T-cell (primary cell): ENCODE measurements at regions of chr1 and their contacts with region 1.

Region 1: GRCh38 chr1:40161888-40162397 is 756 bp downstream of the RLF start:
- DNase-seq: peak in 4 of 35 experiments; percentile 6 to 16 (median 10)
- ATAC-seq: peak in 2 of 4 experiments; percentile 14 to 19
- H3K4me3 ChIP-seq: peak overlapping the region; percentile 91 to 92
- H3K4me3 Mint-ChIP-seq: no peak overlapping the region
- H3K27ac ChIP-seq: peak overlapping the region; percentile 97
- H3K27ac Mint-ChIP-seq: no peak overlapping the region
- H3K4me1 ChIP-seq: peaks cover 12 to 31% of the 10 kb centered on the region in 2 experiments
- H3K4me1 Mint-ChIP-seq: peaks cover 8% of the 10 kb centered on the region in 3 donors
- H3K27me3 ChIP-seq: no peaks in the 10 kb centered on the region
- H3K27me3 Mint-ChIP-seq: no peaks in the 10 kb centered on the region

Region 2: DNA sequence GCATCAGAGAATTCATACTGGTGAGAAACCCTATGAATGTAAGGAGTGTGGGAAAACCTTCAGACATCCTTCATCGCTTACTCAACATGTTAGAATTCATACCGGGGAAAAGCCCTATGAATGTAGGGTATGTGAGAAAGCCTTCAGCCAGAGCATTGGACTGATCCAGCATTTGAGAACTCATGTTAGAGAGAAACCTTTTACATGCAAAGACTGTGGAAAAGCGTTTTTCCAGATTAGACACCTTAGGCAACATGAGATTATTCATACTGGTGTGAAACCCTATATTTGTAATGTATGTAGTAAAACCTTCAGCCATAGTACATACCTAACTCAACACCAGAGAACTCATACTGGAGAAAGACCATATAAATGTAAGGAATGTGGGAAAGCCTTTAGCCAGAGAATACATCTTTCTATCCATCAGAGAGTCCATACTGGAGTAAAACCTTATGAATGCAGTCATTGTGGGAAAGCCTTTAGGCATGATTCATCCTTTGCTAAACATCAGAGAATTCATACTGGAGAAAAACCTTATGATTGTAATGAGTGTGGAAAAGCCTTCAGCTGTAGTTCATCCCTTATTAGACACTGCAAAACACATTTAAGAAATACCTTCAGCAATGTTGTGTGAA is 301.1 kb after region 1 on chr1:
- CTCF ChIA-PET with region 1: no interaction called
- POLR2A ChIA-PET with region 1: interaction called in 1 of 2 experiments, 11 read pairs
- DNase-seq: peak in 1 of 35 experiments; percentile 11
- ATAC-seq: no peak
- H3K4me3 ChIP-seq: no peak overlapping the region
- H3K4me3 Mint-ChIP-seq: no peak overlapping the region
- H3K27ac ChIP-seq: no peak overlapping the region
- H3K27ac Mint-ChIP-seq: no peak overlapping the region
- H3K4me1 ChIP-seq: no peaks in the 10 kb centered on the region
- H3K4me1 Mint-ChIP-seq: no peaks in the 10 kb centered on the region
- H3K27me3 ChIP-seq: no peaks in the 10 kb centered on the region
- H3K27me3 Mint-ChIP-seq: no peaks in the 10 kb centered on the region